ENCODE measurements at regions of chr13 and their contacts with region 1.

Region 1: DNA sequence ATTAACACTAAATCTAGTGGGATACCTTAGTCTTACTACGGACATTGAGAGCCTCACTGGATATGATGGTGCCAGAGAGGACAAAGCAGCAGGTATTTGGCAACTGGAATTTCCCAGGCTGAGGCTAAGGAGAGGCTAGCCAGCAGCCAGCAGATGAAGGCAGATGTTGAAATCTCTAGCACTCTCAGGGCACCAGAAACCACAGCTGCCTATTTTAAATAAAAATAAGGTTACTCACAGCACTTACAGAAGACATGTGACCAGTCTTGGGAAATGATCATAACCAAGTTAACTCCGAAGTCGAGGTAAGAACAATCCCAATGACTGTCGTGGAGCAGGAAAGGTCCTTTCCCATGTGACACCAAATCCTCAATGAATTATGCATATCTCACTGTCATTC is 1726.0 kb downstream of the EFNB2 start:
- DNase-seq: peak in 1 of 2 donors; percentile 28
- H3K4me3 ChIP-seq: no peak overlapping the region
- H3K27ac ChIP-seq: no peak overlapping the region
- H3K4me1 ChIP-seq: no peaks in the 10 kb centered on the region
- H3K27me3 ChIP-seq: no peaks in the 10 kb centered on the region
- CTCF ChIP-seq: no peak
- POLR2A ChIP-seq: no peak

Region 2: DNA sequence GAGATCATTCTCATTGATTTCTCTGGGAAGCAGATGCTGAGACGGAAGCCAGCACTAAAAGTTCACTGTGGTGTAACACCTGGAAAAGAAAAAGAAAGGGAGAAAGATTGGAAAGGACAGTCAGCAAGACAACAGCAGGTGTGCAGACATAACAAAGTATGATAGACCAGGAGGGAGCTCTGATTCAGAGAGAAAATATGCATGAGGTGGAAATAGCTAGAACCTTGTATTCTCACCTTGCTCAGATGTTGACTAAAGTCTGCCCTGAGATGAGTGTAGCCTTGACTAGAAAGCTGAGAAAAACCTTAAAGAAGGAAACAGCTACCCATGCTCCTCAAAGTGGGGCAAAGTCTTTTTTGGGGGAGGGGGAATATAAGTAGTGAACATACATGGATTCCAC is 14.2 kb after region 1 on chr13:
- intact Hi-C with region 1: loop called (anchors 1 kb)
- DNase-seq: no peak
- H3K4me3 ChIP-seq: no peak overlapping the region
- H3K27ac ChIP-seq: no peak overlapping the region
- H3K4me1 ChIP-seq: no peaks in the 10 kb centered on the region
- H3K27me3 ChIP-seq: no peaks in the 10 kb centered on the region
- CTCF ChIP-seq: no peak
- POLR2A ChIP-seq: no peak

Measured in breast epithelium (tissue), 4 donors.